Activated T-helper 1 cell treated with anti-CD3 and anti-CD28 coated beads, Interleukin-12 subunit alpha, Interleukin-12 subunit beta, Interleukin-2, Interleukin-4 antibody, amounts not matched to agents 30 ng/mL and 10 ng/mL and 1 ng/mL, durations not matched to agents 14 hours and 24 hours and 36 hours (primary cell): ENCODE measurements at regions of chr4 and their contacts with region 1.

Region 1: GRCh38 chr4:173013232-173013930 is 155.2 kb upstream of the GALNT7 start:
- DNase-seq: peak; percentile 14
- H3K4me3 Mint-ChIP-seq: no peak overlapping the region
- H3K27ac Mint-ChIP-seq: no peak overlapping the region
- H3K4me1 Mint-ChIP-seq: no peaks in the 10 kb centered on the region
- H3K27me3 Mint-ChIP-seq: peaks cover under 1% of the 10 kb centered on the region

Region 2: DNA sequence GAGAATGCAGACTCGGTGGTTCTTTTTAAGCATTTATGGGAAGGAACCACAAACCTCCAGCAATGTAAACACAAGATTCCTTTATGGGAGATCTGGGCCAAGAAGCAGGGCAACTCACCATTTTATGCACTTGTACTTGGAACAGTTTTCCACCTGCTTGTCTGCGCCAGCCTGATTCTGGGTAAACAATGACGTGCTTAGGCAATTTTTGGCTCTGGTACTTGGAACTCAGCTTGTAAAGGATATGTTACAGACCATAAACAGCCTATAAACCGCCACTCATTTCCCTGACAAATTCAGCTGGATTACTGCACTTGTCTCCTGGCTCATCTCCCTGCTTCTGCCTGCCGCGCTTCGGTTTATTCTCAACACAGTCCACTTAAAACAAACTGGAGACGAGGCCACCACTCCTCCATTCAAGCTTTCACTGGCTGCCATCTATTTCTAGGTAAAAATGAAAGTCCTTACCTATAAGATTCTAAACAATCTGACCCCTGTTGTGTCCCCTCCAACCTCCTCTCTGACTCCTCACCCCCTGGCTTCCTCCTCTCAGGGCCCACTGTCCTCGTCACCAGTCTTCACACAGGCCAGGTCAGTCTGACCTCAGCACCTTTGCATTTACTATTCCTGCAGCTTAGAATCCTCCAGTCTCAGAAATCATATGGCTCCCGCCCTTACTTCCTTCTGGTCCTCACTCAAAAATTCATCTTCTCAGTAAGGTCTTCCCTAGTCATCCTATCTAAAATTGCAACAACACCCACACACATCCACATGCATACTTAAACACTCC is 50.6 kb before region 1 on chr4:
- intact Hi-C with region 1: no loop called
- DNase-seq: no peak
- H3K4me3 Mint-ChIP-seq: no peak overlapping the region
- H3K27ac Mint-ChIP-seq: no peak overlapping the region
- H3K4me1 Mint-ChIP-seq: no peaks in the 10 kb centered on the region
- H3K27me3 Mint-ChIP-seq: peaks cover 7% of the 10 kb centered on the region

Region 3: GRCh38 chr4:173146451-173146850 is 133.1 kb after region 1 on chr4:
- intact Hi-C with region 1: no loop called
- DNase-seq: no peak
- H3K4me3 Mint-ChIP-seq: no peak overlapping the region
- H3K27ac Mint-ChIP-seq: no peak overlapping the region
- H3K4me1 Mint-ChIP-seq: no peaks in the 10 kb centered on the region
- H3K27me3 Mint-ChIP-seq: peaks cover 1% of the 10 kb centered on the region

Region 4: GRCh38 chr4:173168396-173169177 is 155.2 kb after region 1 on chr4 and contains the start of gene GALNT7:
- intact Hi-C with region 1: loop called (anchors 5 kb)
- DNase-seq: peak; percentile 45
- H3K4me3 Mint-ChIP-seq: peak within 1 kb of the TSS; percentile 90
- H3K27ac Mint-ChIP-seq: peak within 1 kb of the TSS; percentile 92
- H3K4me1 Mint-ChIP-seq: peaks cover 35% of the 10 kb centered on the region
- H3K27me3 Mint-ChIP-seq: no peaks in the 10 kb centered on the region
- total RNA-seq, gene GALNT7: 24.6 and 30.5 TPM in 2 replicates

Region 5: DNA sequence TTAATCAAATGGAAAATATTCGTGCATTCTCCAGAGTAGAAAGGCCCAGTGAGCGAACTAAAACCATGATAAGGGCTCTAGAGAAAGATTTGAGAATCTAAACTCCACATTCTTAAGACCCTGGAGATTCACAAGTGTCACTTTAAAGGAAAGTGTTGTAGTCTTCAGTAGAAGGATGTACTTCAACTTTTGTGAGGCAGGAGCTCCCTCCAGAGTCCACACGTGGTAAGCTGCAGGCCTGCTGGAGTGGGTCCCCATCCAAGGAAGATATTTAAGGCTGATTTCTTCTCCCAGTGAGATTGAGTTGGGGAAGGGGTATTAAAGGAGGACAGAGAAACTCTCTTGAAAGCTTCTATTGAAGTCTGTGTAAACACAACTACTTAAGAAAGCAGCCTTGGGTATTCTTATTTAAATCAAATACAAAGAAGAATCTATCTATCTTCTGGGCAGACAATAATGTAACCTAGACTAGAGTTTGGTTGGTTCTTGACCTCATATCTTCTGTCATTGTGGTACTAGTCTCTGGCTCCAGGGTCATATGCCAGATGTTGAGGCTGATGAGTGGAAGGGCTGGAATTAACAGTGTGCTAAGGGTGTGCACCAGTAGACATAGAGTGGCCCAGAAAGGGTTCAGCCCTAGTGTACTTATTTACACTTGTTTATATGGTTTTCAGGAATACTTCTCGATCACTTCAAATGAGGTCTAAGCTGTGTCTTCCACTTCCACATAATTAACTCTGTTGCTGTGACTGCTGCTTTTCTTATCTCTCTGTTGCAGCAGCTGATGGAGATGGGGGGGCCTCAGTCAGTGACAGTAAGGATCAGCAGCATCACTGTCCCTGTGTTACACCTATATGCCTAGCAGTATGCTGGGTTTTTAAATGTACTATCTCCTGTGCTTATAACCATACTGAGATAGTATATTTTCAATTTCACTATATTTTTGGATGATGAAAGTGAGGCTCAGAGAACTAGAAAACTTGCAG is 244.6 kb after region 1 on chr4:
- intact Hi-C with region 1: loop called (anchors 1 kb)
- DNase-seq: peak; percentile 34
- H3K4me3 Mint-ChIP-seq: no peak overlapping the region
- H3K27ac Mint-ChIP-seq: no peak overlapping the region
- H3K4me1 Mint-ChIP-seq: no peaks in the 10 kb centered on the region
- H3K27me3 Mint-ChIP-seq: peaks cover 3% of the 10 kb centered on the region

Region 6: GRCh38 chr4:173301518-173302201 is 288.3 kb after region 1 on chr4:
- intact Hi-C with region 1: loop called (anchors 1 kb)
- DNase-seq: no peak
- H3K4me3 Mint-ChIP-seq: no peak overlapping the region
- H3K27ac Mint-ChIP-seq: no peak overlapping the region
- H3K4me1 Mint-ChIP-seq: no peaks in the 10 kb centered on the region
- H3K27me3 Mint-ChIP-seq: no peaks in the 10 kb centered on the region

Region 7: GRCh38 chr4:173318648-173319211 is 305.3 kb after region 1 on chr4:
- intact Hi-C with region 1: loop called (anchors 1 kb)
- DNase-seq: no peak
- H3K4me3 Mint-ChIP-seq: no peak overlapping the region
- H3K27ac Mint-ChIP-seq: no peak overlapping the region
- H3K4me1 Mint-ChIP-seq: peaks cover 6% of the 10 kb centered on the region
- H3K27me3 Mint-ChIP-seq: no peaks in the 10 kb centered on the region

Region 8: DNA sequence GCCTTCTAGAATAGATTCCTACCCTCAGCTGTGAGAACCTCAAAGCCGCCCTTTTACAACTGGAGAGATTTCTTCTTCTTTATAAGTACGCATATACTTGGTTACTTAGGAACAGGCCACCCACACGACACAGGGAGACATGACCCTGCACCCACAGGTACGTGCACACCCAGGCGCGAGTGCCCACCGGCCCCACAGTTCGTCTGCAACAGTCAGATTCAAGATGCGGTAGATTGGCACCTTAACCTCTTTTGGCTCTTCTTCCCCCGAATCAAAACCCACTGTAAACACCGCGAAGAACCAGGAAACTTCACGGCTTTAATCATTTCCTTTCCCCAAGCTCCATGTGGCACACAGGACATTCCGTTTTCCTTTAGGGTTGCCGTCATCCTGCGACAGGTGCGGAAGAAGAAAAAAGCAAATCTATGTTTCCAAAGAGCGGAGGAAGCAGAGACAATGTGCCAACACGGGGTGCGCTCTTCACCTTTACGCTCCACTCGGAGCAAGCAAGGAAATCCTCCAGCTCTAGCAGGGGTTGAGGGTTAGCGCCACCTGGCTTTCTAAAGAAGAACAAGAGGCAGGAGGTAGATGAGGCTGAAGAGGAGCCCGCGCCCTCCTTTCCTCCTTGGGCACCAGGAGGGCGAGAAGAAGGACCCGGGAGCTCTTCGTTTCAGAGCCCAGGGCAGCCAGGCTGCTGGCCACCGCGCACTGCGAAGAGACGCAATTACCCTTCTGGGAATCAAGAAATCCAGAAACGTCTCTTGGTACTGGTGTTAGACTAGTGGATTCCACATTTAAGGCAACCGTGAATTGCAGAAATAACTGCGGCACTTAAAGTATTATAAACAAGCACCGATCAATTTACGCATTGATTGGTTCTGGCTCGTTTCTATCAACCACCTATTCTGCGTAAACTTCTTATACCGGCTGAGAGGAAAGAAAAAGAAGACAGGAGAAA is 480.9 kb after region 1 on chr4:
- intact Hi-C with region 1: loop called (anchors 1 kb)
- DNase-seq: peak; percentile 56
- H3K4me3 Mint-ChIP-seq: peak overlapping the region; percentile 87
- H3K27ac Mint-ChIP-seq: no peak overlapping the region
- H3K4me1 Mint-ChIP-seq: peaks cover 33% of the 10 kb centered on the region
- H3K27me3 Mint-ChIP-seq: peaks cover 35% of the 10 kb centered on the region